GM10248 (cell line): ENCODE measurements at regions of chr17 and their contacts with region 1.

Region 1: GRCh38 chr17:65035175-65035574 is 21.4 kb downstream of the GNA13 start:
- DNase-seq: no peak
- CTCF ChIP-seq: no peak

Region 2: GRCh38 chr17:65001409-65002102 is 33.6 kb before region 1 on chr17:
- CTCF ChIA-PET with region 1: no interaction called
- POLR2A ChIA-PET with region 1: no interaction called
- DNase-seq: no peak
- CTCF ChIP-seq: no peak

Region 3: DNA sequence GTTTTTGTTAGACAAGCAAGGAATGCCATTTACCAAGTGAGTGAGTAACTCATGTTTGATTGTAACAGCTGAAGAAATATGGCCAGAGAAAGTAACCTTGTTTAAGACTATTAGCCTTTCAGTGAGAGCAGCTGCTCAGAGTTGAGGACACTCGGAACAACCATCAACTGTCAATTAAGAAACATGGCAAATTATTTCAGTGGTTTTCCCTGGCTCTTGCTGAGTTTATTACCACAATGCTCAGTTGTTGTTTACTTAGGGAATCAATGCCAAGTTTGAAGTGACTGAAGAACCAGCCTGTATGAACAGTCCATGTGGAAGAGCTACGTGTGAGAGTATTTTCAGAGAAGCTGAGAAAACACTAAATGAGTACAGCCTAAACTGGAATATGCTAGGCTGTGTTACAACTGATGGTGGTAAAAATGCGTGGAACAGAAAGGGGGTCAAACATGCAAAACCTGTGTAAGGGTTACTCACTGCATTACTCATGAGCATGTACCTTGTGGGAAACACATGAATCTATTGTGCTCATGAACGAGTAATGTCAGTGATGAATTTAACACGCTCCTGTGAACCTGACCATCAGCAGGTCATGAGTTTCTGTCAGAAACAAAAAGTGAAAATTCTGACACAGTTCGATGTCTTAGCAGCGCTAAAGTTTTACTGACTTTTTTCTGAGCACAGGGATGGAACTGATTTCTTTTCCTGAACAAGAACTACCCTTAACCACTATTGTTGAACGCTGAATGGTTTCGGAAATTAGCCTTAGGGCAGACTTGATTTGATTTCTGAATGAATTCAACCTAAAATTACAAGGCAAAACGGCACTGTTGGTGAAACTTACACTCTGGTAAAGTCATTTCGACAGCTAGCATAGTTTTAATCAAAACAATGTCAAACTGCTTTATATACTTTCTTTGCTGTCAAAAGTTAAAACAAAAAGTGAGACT is 12.1 kb before region 1 on chr17:
- CTCF ChIA-PET with region 1: interaction called, 16 read pairs
- POLR2A ChIA-PET with region 1: no interaction called
- DNase-seq: peak; percentile 76
- CTCF ChIP-seq: no peak

Region 4: GRCh38 chr17:65047942-65048341 is 12.8 kb after region 1 on chr17:
- CTCF ChIA-PET with region 1: interaction called, 10 read pairs
- POLR2A ChIA-PET with region 1: interaction called, 3 read pairs
- DNase-seq: no peak
- CTCF ChIP-seq: no peak

Region 5: DNA sequence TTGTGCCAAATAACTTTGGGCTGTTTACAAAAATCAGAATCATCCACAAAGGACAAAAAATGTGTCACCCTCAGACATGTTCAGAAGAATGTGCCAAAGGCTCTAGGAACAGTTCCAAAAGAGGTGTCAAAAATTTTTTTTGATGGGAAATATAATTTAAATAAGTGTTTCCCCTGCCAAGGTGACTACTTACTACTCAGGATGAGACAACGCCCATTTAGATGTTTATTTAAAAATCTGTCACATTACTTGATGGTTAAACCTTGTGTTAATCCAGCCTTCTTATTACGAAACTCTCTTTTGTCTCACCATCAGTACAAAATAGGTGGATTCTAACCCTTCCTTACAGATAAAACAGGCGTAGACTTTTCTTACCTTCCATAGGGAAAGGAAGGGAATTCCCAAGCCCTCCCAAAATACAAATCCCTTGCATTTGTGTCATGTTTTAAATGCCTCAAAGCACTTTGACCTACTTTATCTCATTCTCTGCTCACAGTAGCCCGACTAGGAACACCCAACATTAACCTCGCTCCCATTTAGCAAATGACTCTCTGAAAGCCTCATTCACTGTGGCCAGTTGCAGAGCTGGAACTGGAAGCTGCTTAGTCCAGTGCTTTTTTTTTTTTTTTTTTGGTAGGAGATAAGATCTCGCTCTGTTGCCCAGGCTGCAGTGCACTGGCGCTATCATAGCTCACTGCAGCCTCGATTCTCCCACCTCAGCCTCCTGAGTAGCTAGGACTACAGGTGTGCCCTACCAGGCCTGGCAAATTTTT is 27.2 kb after region 1 on chr17:
- CTCF ChIA-PET with region 1: no interaction called
- POLR2A ChIA-PET with region 1: no interaction called
- DNase-seq: no peak
- CTCF ChIP-seq: no peak